Caco-2 (cell line): ENCODE measurements at regions of chr10 and their contacts with region 1.

Region 1: GRCh38 chr10:110671788-110672579 is 27.8 kb downstream of the RBM20 start:
- DNase-seq: peak; percentile 64 to 75
- H3K4me3 ChIP-seq: peak overlapping the region; percentile 50
- H3K4me3 Mint-ChIP-seq: peak overlapping the region; percentile 71
- H3K27ac Mint-ChIP-seq: peak overlapping the region; percentile 60
- H3K4me1 ChIP-seq: no peaks in the 10 kb centered on the region
- H3K4me1 Mint-ChIP-seq: no peaks in the 10 kb centered on the region
- H3K27me3 ChIP-seq: no peaks in the 10 kb centered on the region
- H3K27me3 Mint-ChIP-seq: peaks cover 9% of the 10 kb centered on the region
- CTCF ChIP-seq: peak; percentile 69 to 81

Region 2: DNA sequence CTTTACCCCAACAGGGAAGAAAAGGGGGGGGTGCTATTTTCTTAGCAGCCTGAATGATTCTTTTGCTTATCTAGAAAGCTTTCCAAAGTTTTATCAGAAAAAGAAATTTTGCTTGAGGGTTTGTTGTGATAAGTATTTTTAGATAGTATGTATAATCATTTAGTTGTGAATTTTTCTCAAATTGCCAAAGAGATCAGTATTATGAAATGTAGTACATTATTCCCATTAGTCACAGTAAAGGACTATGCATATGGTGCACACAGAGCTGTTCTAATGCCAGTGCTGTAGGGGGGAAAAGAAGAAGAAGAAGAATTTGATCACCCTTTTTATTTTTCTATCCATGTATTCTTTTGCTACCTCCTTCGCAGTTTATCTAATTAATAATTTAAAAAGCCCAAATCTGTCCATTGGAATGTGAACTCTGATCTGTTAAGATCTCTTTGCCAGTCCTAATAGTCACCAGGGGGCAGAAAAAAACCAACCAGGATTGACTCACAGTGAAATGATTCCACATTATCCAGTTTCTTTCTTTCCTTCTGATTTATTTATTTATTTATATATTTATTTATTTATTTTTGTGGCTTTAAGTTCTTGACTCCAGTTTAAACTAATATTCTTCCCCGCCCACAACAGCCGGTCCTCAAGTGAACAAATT is 23.2 kb before region 1 on chr10:
- CTCF ChIA-PET with region 1: interaction called, 6 read pairs
- POLR2A ChIA-PET with region 1: no interaction called
- intact Hi-C with region 1: loop called (anchors 2 kb)
- DNase-seq: no peak
- H3K4me3 ChIP-seq: no peak overlapping the region
- H3K4me3 Mint-ChIP-seq: no peak overlapping the region
- H3K27ac Mint-ChIP-seq: no peak overlapping the region
- H3K4me1 ChIP-seq: no peaks in the 10 kb centered on the region
- H3K4me1 Mint-ChIP-seq: peaks cover 6% of the 10 kb centered on the region
- H3K27me3 ChIP-seq: no peaks in the 10 kb centered on the region; the same call in 1 of the 2 replicates
- H3K27me3 Mint-ChIP-seq: peaks cover 23% of the 10 kb centered on the region
- CTCF ChIP-seq: no peak

Region 3: DNA sequence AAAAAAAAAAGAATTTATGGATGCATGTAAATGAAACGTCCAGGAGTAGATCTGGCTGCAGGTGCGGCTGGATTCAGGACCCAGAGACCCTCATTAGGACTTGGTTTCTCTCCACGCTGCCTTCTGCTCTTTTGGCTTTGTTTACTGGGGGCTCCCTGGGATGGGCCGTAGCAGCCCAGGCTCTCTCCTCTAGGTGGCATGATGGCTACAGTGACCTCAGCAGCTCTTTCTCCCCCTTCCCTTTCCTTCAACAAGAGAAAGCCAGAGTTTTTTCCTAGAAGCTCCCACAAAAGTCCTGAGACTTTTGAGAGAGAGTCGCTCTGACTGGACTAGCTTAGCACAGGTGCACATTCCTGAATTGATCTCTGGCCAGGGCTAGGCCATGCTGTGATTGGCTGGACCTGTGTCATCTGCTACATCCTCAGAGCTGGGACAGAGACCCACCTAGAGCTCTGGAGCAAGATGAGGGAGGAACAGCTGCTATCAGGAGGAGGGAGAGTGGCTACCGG is 131.9 kb after region 1 on chr10:
- CTCF ChIA-PET with region 1: no interaction called
- POLR2A ChIA-PET with region 1: no interaction called
- intact Hi-C with region 1: no loop called
- DNase-seq: peak; percentile 55 to 72
- H3K4me3 ChIP-seq: no peak overlapping the region
- H3K4me3 Mint-ChIP-seq: no peak overlapping the region
- H3K27ac Mint-ChIP-seq: peak overlapping the region; percentile 68
- H3K4me1 ChIP-seq: peaks cover 6% of the 10 kb centered on the region
- H3K4me1 Mint-ChIP-seq: peaks cover 13% of the 10 kb centered on the region
- H3K27me3 ChIP-seq: no peaks in the 10 kb centered on the region
- H3K27me3 Mint-ChIP-seq: peaks cover 3% of the 10 kb centered on the region
- CTCF ChIP-seq: peak; percentile 55 to 92